ENCODE measurements at regions of chr20 and their contacts with region 1.

Region 1: DNA sequence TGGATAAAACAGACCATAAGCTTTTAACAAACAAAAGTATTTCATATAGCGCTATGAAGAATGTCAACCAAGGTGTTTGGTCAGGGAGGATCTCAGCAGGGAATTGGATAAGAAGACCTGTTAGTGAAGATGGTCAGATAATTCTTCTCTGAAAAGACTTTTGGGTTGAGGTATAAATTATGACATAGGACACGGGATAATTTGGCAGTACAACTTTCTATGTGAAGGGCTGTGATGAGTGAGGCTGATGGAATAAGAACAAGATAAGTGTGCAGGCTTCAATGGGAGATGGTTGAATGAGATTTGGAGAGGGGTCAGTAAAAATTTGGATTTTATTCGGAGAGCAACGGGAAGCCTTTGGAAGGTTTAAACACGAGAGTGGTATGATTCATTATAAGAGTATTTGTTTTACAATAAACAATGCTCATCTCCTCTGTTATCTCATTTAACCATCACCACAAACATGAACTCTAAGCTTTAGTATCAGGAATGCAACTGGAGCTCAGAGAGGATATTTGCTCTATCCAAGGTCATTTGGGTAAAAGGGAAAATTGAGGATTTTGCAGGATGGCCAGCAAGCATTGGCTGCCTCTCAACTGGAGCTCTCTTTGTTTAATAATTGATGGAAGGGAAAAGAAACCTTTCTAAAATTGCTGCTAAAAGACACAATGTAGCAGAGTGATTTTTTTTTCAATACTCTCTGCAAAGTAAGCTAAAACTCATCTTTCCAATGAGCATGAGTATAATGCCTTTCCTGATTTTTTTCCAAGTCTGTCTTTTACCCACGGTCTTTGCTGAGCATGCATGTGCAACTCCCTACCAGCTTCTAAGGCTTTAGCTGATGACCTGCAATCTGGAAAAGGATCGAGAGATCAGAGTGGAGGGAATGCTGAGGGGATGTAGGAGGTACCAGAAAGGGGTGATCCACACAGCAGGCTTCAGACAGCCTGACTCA is 534.0 kb downstream of the CBLN4 start:
- DNase-seq: no peak
- H3K4me3 ChIP-seq: no peak overlapping the region
- H3K27ac ChIP-seq: no peak overlapping the region
- H3K4me1 ChIP-seq: no peaks in the 10 kb centered on the region
- H3K27me3 ChIP-seq: no peaks in the 10 kb centered on the region
- CTCF ChIP-seq: no peak

Region 2: DNA sequence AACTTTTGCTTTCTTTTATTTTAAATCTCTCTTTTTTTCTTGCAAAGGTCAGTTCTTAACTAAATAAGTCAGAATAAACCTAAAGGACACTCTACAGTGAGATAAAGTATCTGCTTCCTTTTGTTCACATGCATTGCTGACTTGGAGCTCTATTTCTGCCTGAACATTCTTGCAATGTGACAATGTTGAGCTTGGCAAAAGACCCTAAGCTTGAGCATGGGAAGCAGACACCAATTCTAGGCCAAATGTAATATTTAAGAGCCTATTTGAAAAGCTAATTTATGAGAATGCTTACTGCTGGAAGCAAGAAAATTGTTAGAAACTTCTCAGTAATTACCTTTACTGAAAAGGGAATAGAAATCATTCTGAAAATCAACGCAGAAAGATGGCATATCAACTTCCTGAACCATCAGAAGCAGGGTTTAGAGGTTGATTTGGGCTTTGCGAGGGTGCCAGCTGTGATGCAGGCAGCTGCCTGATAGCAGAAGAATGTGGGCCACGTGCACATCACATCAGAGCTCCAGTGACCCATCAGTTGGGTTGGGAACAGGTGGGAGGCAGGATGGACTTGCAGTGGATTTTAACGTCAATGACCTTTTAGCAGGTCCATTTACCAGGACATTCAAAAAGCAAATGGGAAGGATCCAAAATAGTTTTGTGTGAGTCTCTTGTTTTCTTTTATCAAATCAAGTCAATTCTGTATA is 22.1 kb before region 1 on chr20:
- CTCF ChIA-PET with region 1: no interaction called
- dilution Hi-C with region 1: no loop called
- in situ Hi-C with region 1: no loop called
- intact Hi-C with region 1: no loop called
- DNase-seq: no peak
- H3K4me3 ChIP-seq: no peak overlapping the region
- H3K27ac ChIP-seq: no peak overlapping the region
- H3K4me1 ChIP-seq: no peaks in the 10 kb centered on the region
- H3K27me3 ChIP-seq: no peaks in the 10 kb centered on the region
- CTCF ChIP-seq: no peak

Region 3: GRCh38 chr20:55500130-55500529 is 28.8 kb after region 1 on chr20:
- CTCF ChIA-PET with region 1: no interaction called
- dilution Hi-C with region 1: no loop called
- in situ Hi-C with region 1: no loop called
- intact Hi-C with region 1: loop called (anchors 1 kb)
- DNase-seq: no peak
- H3K4me3 ChIP-seq: no peak overlapping the region
- H3K27ac ChIP-seq: no peak overlapping the region
- H3K4me1 ChIP-seq: no peaks in the 10 kb centered on the region
- H3K27me3 ChIP-seq: peaks cover 6% of the 10 kb centered on the region
- CTCF ChIP-seq: no peak

Measured in mammary epithelial cell (primary cell).